ENCODE measurements at regions of chr6 and their contacts with region 1.

Region 1: DNA sequence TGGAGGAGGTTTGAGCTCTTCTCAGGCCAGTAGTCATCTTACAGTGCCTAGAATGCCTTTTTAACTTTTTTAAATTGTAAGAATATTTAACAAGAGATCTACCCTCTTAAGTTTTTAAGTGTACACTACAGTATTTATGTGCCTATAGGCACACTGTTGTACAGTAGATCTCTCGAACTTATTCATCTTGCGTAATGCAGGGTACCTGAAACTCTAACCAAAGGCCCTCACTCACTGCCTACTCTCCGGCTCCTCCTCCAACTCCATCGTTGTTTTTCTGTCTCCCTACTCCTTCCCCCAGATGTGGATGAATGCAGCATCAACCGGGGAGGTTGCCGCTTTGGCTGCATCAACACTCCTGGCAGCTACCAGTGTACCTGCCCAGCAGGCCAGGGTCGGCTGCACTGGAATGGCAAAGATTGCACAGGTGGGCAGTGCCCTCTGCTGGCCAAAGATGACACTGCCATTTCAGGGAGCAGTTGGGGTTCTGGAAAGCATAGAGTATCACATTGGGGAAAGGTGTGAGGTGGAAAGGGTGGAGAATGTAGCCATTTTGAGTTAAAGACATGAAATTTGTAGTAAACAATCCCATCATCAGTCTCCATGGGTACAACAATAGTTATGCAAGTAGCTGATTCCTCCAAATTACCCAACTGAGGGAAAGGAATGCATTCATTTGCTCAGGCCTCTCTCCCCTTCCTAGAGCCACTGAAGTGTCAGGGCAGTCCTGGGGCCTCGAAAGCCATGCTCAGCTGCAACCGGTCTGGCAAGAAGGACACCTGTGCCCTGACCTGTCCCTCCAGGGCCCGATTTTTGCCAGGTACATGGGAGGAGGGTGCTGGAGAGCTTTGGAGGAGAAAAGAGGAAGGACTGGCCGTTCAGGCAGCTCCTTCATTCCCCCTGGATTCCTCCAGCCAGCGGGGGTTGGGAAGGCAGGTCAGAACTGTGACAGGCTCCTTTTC is 18.4 kb upstream of the ZNF76 start:
- DNase-seq: peak; percentile 56 to 83 (median 72)
- ATAC-seq: peak; percentile 90
- H3K4me3 ChIP-seq: no peak overlapping the region
- H3K4me3 Mint-ChIP-seq: no peak overlapping the region
- H3K27ac ChIP-seq: no peak overlapping the region
- H3K27ac Mint-ChIP-seq: no peak overlapping the region
- H3K4me1 ChIP-seq: no peaks in the 10 kb centered on the region
- H3K4me1 Mint-ChIP-seq: peaks cover 3% of the 10 kb centered on the region
- H3K27me3 ChIP-seq: no peaks in the 10 kb centered on the region
- H3K27me3 Mint-ChIP-seq: no peaks in the 10 kb centered on the region
- CTCF ChIP-seq: peak; percentile 100

Region 2: DNA sequence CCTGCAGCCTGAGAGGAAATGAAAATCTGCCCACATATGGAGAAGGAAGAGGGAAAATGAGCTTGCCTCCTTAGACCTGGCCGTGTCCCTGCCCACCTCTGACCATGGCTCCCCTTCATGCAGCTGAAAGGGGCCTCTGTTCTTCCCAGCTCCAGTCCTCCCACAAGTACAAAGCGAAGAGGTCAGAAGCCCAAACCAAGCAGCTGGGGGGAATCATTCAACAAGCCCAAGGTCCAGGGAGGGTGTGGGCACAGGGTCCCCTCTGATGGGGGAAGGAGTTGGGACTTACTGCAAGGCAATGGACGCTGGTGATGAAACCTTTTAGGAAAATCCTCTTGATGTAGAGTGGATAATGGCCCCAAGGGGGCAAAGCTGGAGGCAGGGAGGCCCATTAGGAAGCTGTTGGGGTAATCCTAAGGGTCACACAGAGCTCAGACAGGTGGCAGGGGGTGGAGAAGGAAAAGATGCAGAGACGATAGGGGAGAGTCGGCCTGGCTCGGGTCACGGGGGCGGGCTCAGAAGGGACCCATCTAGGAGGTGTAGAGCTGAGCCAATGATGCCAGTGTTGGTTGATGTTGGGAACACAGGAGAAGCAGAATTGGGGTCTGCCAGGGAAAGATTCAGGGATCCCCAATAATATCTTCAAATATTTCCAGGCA is 1079.1 kb before region 1 on chr6:
- CTCF ChIA-PET with region 1: interaction called, 4 read pairs
- POLR2A ChIA-PET with region 1: no interaction called
- intact Hi-C with region 1: loop called in 1 of 2 experiments (anchors 10 kb)
- DNase-seq: no peak
- ATAC-seq: no peak
- H3K4me3 ChIP-seq: no peak overlapping the region
- H3K4me3 Mint-ChIP-seq: no peak overlapping the region
- H3K27ac ChIP-seq: no peak overlapping the region
- H3K27ac Mint-ChIP-seq: no peak overlapping the region
- H3K4me1 ChIP-seq: no peaks in the 10 kb centered on the region
- H3K4me1 Mint-ChIP-seq: no peaks in the 10 kb centered on the region
- H3K27me3 ChIP-seq: no peaks in the 10 kb centered on the region
- H3K27me3 Mint-ChIP-seq: peaks cover 2% of the 10 kb centered on the region
- CTCF ChIP-seq: no peak

Region 3: GRCh38 chr6:34771727-34772126 is 469.4 kb before region 1 on chr6:
- CTCF ChIA-PET with region 1: no interaction called
- POLR2A ChIA-PET with region 1: no interaction called
- intact Hi-C with region 1: no loop called
- DNase-seq: no peak
- ATAC-seq: no peak
- H3K4me3 ChIP-seq: no peak overlapping the region
- H3K4me3 Mint-ChIP-seq: no peak overlapping the region
- H3K27ac ChIP-seq: no peak overlapping the region
- H3K27ac Mint-ChIP-seq: no peak overlapping the region
- H3K4me1 ChIP-seq: no peaks in the 10 kb centered on the region
- H3K4me1 Mint-ChIP-seq: peaks cover 15% of the 10 kb centered on the region
- H3K27me3 ChIP-seq: no peaks in the 10 kb centered on the region
- H3K27me3 Mint-ChIP-seq: no peaks in the 10 kb centered on the region
- CTCF ChIP-seq: no peak

Region 4: DNA sequence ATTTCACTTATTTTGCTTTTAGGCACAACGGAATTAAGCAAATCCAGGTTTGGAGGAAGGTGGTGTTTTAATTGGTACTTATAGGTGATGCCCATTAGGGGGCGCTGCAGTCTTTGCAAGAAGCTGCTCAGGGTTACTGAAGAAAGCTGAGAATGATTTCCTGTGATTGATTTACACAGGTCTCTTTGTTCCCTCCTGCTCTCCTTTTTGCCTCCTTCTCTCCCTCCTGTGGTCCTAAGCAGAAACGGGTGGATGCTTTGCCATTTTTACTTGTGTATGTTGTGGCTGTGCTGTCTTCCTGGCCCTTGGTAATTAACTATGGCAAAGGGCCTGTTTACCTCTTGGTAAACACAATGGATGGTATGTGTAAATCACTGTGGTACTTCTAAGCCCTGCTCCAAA is 254.3 kb before region 1 on chr6:
- CTCF ChIA-PET with region 1: interaction called, 21 read pairs
- POLR2A ChIA-PET with region 1: no interaction called
- intact Hi-C with region 1: loop called in 1 of 2 experiments (anchors 1 kb)
- DNase-seq: peak; percentile 16 to 75 (median 61)
- ATAC-seq: peak; percentile 66
- H3K4me3 ChIP-seq: no peak overlapping the region
- H3K4me3 Mint-ChIP-seq: no peak overlapping the region
- H3K27ac ChIP-seq: no peak overlapping the region
- H3K27ac Mint-ChIP-seq: no peak overlapping the region
- H3K4me1 ChIP-seq: no peaks in the 10 kb centered on the region
- H3K4me1 Mint-ChIP-seq: no peaks in the 10 kb centered on the region
- H3K27me3 ChIP-seq: no peaks in the 10 kb centered on the region
- H3K27me3 Mint-ChIP-seq: no peaks in the 10 kb centered on the region
- CTCF ChIP-seq: peak; percentile 71

Region 5: DNA sequence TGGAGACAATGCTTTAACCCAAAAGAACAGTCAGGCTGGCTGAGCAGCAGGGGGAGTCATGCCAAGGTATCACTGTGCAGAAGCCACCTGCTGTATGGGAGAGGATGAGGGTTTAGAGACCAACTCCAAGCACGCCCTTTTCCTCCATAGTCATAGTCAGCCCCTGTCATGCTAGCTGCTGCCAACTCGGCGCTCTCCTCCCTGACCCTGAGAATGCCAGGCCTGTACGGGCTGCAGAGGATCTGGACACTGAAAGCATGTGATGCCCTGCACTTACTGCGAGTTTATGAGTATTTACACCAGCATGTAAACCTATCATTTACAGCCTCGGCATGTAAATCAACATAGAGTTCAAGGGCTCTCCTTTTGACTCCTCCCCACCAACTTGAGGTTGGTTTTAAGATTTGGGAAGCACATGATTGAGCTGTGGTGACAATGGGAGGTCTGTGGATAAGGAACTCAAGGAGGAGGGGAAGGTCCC is 39.0 kb before region 1 on chr6:
- CTCF ChIA-PET with region 1: interaction called, 18 read pairs
- POLR2A ChIA-PET with region 1: no interaction called
- intact Hi-C with region 1: no loop called
- DNase-seq: no peak
- ATAC-seq: no peak
- H3K4me3 ChIP-seq: no peak overlapping the region
- H3K4me3 Mint-ChIP-seq: no peak overlapping the region
- H3K27ac ChIP-seq: no peak overlapping the region
- H3K27ac Mint-ChIP-seq: no peak overlapping the region
- H3K4me1 ChIP-seq: no peaks in the 10 kb centered on the region
- H3K4me1 Mint-ChIP-seq: no peaks in the 10 kb centered on the region
- H3K27me3 ChIP-seq: peaks cover 0 to 4% of the 10 kb centered on the region in 2 experiments
- H3K27me3 Mint-ChIP-seq: peaks cover 40% of the 10 kb centered on the region
- CTCF ChIP-seq: no peak

Region 6: GRCh38 chr6:35259194-35259947 is 18.2 kb after region 1 on chr6 and contains the start of gene ZNF76:
- CTCF ChIA-PET with region 1: interaction called, 14 read pairs
- POLR2A ChIA-PET with region 1: interaction called, 3 read pairs
- intact Hi-C with region 1: no loop called
- DNase-seq: peak; percentile 86 to 97 (median 93)
- ATAC-seq: peak; percentile 73
- H3K4me3 ChIP-seq: peak within 1 kb of the TSS; percentile 75 to 95
- H3K4me3 Mint-ChIP-seq: peak within 1 kb of the TSS; percentile 97
- H3K27ac ChIP-seq: peak within 1 kb of the TSS; percentile 88 to 96
- H3K27ac Mint-ChIP-seq: peak within 1 kb of the TSS; percentile 99
- H3K4me1 ChIP-seq: peaks cover 42% of the 10 kb centered on the region
- H3K4me1 Mint-ChIP-seq: peaks cover 55% of the 10 kb centered on the region
- H3K27me3 ChIP-seq: no peaks in the 10 kb centered on the region
- H3K27me3 Mint-ChIP-seq: no peaks in the 10 kb centered on the region
- CTCF ChIP-seq: no peak
- total RNA-seq, gene ZNF76: 54.6 to 57.8 TPM

Region 7: DNA sequence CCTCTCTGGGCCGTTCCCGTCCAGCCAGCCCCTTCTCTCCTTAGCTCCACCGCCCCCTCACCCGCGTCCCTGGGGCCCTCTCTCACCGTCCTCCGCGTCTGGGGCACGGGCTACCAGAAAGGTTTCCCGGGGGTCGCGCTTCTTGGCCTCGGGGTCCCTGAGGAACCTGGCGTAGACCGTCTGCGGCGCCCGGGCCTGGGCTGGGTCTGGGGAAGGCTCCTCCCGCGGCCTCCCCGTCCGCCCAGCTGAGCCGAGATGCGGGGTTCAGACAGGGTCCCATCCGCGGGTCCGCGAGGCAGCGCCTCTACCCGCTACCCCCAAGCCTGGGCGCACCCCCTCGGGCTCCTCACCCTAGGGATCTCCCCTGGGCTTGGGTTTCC is 270.4 kb after region 1 on chr6:
- CTCF ChIA-PET with region 1: no interaction called
- POLR2A ChIA-PET with region 1: no interaction called
- intact Hi-C with region 1: no loop called
- DNase-seq: no peak
- ATAC-seq: no peak
- H3K4me3 ChIP-seq: no peak overlapping the region
- H3K4me3 Mint-ChIP-seq: no peak overlapping the region
- H3K27ac ChIP-seq: no peak overlapping the region
- H3K27ac Mint-ChIP-seq: no peak overlapping the region
- H3K4me1 ChIP-seq: peaks cover 10% of the 10 kb centered on the region
- H3K4me1 Mint-ChIP-seq: peaks cover under 1% of the 10 kb centered on the region
- H3K27me3 ChIP-seq: peaks cover 0 to 15% of the 10 kb centered on the region in 2 experiments
- H3K27me3 Mint-ChIP-seq: peaks cover 5% of the 10 kb centered on the region
- CTCF ChIP-seq: no peak